ENCODE measurements at regions of chr18 and their contacts with region 1.

Region 1: DNA sequence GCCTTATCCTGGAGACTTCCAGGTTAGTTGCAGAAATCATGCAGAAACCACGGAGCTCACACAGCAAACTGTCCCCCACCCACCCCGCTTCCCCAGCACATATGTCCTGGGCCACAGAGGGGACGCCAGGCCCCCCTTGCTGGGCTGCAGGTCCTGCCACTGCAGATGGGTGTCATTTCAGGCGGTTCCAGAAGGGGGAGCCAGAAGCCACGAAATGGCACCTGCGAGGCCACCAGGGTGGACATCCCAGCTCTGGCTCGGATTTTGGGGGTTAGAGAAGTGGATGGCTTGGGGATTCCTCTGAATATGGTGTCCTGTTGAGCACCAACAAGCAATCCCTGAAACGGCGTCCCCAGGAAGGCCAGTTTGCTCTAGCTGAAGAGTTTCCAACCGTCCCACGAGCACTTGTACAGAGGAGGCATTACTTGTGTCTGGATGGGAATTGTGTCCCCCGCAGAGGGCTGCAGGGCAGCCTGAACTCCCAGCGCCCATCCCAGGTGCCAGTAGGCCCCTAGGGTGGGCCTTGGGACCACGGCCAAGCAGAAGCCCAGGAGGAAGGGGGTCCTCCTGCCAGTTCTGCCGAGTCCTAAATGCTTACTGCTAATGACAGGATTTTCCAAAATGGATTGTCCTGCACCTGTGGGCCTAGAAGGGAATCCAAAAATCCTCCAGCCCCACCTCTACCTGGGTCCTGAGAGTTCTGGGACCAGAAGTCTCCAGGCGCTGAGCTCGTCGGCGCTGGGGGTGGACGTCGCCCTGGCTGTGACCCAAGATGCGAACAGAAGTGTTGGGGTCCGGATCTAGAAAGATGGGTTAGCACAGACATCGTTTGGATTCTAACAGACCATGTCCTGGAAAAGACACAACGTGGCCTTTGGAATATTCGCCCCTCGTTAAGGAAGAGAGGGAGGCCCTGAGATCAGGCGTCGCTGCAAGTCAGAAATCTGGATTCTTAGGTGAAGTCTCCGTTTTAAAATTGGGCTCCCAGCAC is 14.6 kb upstream of the NFATC1 start:
- DNase-seq: no peak
- ATAC-seq: peak; percentile 73
- H3K4me3 ChIP-seq: no peak overlapping the region
- H3K27ac ChIP-seq: no peak overlapping the region
- H3K4me1 ChIP-seq: no peaks in the 10 kb centered on the region; the same call in 1 of the 2 replicates
- H3K27me3 ChIP-seq: no peaks in the 10 kb centered on the region; the same call in 1 of the 2 replicates
- CTCF ChIP-seq: no peak

Region 2: DNA sequence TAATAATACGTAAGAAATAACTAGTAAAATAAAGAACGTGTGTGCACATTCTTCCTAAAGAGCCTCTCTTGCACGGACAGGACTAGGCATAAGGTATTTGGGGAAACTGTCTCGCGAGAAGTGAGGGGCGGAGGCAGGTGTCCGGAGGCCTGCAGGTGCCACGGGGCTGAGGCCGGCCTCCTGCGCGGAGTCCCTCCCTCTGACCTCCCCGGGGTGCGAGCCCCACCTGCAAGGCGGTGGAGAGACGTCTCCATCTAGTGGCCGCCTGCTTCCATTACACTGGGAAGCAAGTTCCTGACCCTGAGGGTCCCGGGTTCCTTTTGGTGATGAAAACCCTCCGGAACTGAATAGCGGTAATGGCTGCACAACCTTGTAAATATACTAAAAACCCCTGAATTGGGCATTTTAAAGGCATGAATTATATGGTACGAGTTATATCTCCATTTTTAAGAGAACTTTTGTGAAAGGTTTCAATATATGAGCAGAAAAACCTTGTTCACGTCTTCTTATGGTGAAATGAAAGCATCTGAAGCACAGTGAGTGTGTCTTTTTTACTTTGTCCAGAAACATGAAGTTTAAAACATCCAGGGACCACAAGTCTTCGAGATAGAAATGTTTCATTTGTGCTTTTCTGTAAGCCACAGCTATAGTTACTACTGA is 263.0 kb after region 1 on chr18:
- CTCF ChIA-PET with region 1: interaction called, 5 read pairs
- POLR2A ChIA-PET with region 1: no interaction called
- in situ Hi-C with region 1: no loop called
- intact Hi-C with region 1: loop called (anchors 1 kb)
- DNase-seq: peak; percentile 32
- ATAC-seq: peak; percentile 93
- H3K4me3 ChIP-seq: peak overlapping the region in 1 of 2 experiments; percentile 9; a peak in 1 of 4 replicates
- H3K27ac ChIP-seq: no peak overlapping the region
- H3K4me1 ChIP-seq: peaks cover 5% of the 10 kb centered on the region; the same call in 1 of the 2 replicates
- H3K27me3 ChIP-seq: no peaks in the 10 kb centered on the region
- CTCF ChIP-seq: no peak

Region 3: GRCh38 chr18:79679111-79679872 is 298.2 kb after region 1 on chr18 and contains the start of gene CTDP1:
- CTCF ChIA-PET with region 1: no interaction called
- POLR2A ChIA-PET with region 1: no interaction called
- in situ Hi-C with region 1: no loop called
- intact Hi-C with region 1: no loop called
- DNase-seq: peak; percentile 98
- ATAC-seq: peak; percentile 98
- H3K4me3 ChIP-seq: peak within 1 kb of the TSS; percentile 69 to 84
- H3K27ac ChIP-seq: peak within 1 kb of the TSS; percentile 95
- H3K4me1 ChIP-seq: peaks cover 21% of the 10 kb centered on the region
- H3K27me3 ChIP-seq: no peaks in the 10 kb centered on the region
- CTCF ChIP-seq: no peak
- total RNA-seq, gene CTDP1: 52.8 TPM

Region 4: DNA sequence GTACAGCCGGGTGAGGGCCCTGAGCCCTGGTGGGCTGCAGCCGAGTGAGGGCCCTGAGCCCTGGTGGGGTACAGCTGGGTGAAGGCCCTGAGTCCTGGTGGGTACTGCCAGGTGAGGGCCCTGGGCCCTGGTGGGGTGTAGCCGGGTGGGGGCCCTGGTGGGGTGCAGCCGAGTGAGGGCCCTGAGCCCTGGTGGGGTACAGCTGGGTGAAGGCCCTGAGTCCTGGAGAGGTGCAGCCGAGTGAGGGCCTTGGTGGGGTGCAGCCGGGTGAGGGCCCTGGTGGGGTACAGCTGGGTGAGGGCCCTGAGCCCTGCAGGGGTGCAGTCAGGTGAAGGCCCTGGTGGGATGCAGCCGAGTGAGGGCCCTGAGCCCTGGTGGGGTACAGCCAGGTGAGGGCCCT is 335.9 kb after region 1 on chr18:
- CTCF ChIA-PET with region 1: no interaction called
- POLR2A ChIA-PET with region 1: no interaction called
- in situ Hi-C with region 1: no loop called
- intact Hi-C with region 1: no loop called
- DNase-seq: no peak
- ATAC-seq: peak; percentile 11; the same call in 1 of the 2 replicates
- H3K4me3 ChIP-seq: no peak overlapping the region
- H3K27ac ChIP-seq: no peak overlapping the region
- H3K4me1 ChIP-seq: no peaks in the 10 kb centered on the region
- H3K27me3 ChIP-seq: no peaks in the 10 kb centered on the region
- CTCF ChIP-seq: no peak